H1 (cell line): ENCODE measurements at regions of chr1 and their contacts with region 1.

Region 1: DNA sequence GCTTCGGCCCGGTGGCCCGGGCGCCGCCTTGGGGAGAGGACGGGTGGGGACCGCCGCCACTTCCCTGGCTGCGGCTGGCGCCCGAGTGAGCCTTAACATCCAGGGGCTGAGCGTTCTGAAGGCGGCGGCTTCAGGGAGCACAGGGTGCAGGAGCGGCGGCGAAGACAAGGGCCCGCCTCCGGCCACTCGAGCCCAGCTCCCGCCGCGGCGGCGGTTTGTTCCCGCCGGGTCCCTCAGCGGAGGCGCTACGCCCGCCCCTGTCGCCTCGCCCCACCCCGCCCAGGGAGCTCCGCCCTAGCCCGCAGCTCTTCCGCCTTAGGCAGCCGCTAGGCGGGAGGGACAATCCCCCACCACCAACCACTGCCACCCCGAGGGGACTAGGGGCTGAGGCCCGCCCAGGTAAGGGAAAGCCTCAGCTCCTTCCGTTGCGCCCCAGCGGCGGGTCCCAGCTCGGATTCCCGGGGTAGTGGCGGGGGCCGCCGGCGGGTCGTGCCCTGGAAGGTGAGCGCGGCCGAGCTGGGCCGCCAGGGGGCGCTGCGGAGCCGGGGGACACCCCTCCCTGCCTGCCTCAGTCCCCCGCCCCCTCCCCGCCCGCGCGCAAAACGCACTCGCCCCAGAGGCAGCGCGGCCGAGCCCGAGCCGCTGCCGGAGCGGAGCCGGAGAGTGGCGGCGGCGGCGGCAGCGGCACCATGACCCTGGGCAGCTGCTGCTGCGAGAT is at the start of gene FOXD2:
- DNase-seq: peak; percentile 61 to 99
- H3K4me3 ChIP-seq: peak within 1 kb of the TSS; percentile 16 to 65 (median 49)
- H3K27ac ChIP-seq: no peak within 1 kb of the TSS
- H3K4me1 ChIP-seq: peaks cover 3 to 36% (median 18%) of the 10 kb centered on the region in 4 experiments
- H3K27me3 ChIP-seq: peaks cover 92 to 99% (median 98%) of the 10 kb centered on the region in 4 experiments
- CTCF ChIP-seq: peak in 2 of 3 experiments; percentile 54 to 68; a peak in 3 of 4 replicates
- EP300 ChIP-seq: no peak
- POLR2A ChIP-seq: no peak
- RAD21 ChIP-seq: peak; percentile 30 to 38; a peak in 3 of 4 replicates
- total RNA-seq, gene FOXD2: not detected in 2 replicates

Region 2: DNA sequence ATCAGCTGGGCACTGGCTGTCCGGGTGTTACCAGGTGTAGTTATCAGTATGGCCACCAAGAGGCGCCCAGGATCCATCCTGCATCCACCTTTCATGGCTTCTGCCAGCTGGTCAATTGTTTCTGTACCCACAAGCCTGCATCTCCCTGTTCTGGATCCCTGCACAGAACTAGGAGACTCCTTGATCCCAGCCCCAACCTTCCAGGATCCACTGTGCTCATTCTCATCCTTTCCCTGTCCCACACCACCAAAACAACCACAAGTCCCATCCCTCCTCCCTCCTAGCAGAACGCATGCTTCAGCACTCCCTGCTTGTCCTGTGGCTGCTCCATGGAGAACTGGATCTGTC is 48.7 kb before region 1 on chr1:
- CTCF ChIA-PET with region 1: interaction called, 103 read pairs
- POLR2A ChIA-PET with region 1: interaction called, 3 read pairs
- DNase-seq: peak; percentile 46 to 89
- H3K4me3 ChIP-seq: no peak overlapping the region
- H3K27ac ChIP-seq: no peak overlapping the region
- H3K4me1 ChIP-seq: no peaks in the 10 kb centered on the region
- H3K27me3 ChIP-seq: peaks cover 0 to 2% (median 0%) of the 10 kb centered on the region in 4 experiments; a peak in 2 of 7 replicates
- CTCF ChIP-seq: peak; percentile 80 to 93 (median 89)
- EP300 ChIP-seq: no peak
- POLR2A ChIP-seq: no peak
- RAD21 ChIP-seq: peak; percentile 92 to 94

Region 3: DNA sequence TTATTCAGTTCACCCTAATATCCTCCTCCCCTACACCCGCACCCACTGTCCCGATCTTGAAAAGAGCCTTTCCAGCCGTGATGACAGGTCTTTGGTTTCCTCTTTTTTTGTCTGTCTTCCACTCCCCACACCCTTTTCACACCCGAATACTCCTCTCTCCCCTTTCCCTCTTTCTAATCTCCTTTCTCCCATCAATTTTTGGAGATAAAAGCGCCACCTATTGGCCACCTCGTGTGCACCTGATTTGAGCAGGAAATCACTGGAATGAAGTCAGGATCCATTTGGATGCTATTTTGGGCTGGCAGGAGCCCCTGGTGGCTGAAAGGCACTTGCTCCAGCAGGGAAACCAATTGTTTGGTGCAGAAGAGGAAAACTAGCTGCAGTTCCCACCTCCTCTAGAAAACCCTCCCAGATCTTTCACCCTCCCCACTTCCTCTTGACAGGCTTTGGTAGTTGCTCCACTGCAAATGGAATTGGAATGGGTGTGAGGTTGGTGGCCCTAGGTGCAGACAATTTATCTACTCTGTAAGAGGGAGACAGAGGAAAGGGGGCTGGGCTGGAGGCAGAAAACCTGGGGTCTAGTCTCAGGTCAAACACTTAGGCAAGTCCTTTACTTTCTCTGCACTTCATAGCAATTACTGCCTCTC is 13.1 kb before region 1 on chr1:
- CTCF ChIA-PET with region 1: interaction called, 140 read pairs
- POLR2A ChIA-PET with region 1: interaction called, 3 read pairs
- DNase-seq: peak in 1 of 2 experiments; percentile 69
- H3K4me3 ChIP-seq: no peak overlapping the region
- H3K27ac ChIP-seq: no peak overlapping the region
- H3K4me1 ChIP-seq: peaks cover 0 to 3% (median 2%) of the 10 kb centered on the region in 4 experiments; a peak in 2 of 7 replicates
- H3K27me3 ChIP-seq: peaks cover 11 to 53% (median 39%) of the 10 kb centered on the region in 4 experiments
- CTCF ChIP-seq: peak; percentile 72 to 98 (median 95)
- EP300 ChIP-seq: no peak
- POLR2A ChIP-seq: no peak
- RAD21 ChIP-seq: peak; percentile 62 to 71

Region 4: DNA sequence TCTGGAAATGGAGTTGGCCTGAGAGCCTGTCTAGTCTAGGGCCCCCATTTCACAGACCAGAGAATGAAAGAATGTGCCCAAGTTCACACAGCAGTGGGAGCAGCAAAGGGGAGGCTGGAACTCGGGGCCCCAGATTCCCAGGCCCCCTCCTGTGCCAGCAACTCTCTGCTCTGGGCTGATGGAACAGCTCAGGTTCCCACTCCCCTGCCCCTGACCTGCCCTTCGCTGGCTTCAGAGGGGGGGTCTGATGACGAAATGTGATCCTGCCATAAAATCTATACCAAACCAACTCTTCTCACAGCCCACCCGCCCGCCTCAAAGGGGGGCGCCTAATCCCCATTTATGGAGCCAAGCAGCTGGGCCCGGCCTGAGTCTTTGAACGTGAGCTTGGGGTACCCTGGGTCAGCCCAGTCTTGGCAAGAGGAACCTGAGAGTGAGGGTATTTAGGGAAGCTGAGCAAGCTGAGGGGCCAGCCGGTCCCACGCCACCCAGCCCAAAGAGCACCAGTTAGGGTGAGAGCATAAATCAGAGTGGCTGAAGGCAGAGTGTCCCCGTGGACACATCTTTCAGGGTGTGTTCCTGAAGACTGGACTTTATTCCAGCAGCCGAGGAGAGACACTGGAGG is 65.3 kb after region 1 on chr1:
- CTCF ChIA-PET with region 1: interaction called, 17 read pairs
- POLR2A ChIA-PET with region 1: no interaction called
- DNase-seq: no peak
- H3K4me3 ChIP-seq: no peak overlapping the region
- H3K27ac ChIP-seq: no peak overlapping the region
- H3K4me1 ChIP-seq: peaks cover 0 to 4% (median 0%) of the 10 kb centered on the region in 4 experiments; a peak in 1 of 7 replicates
- H3K27me3 ChIP-seq: peaks cover 15 to 30% (median 25%) of the 10 kb centered on the region in 4 experiments
- CTCF ChIP-seq: no peak
- EP300 ChIP-seq: no peak
- POLR2A ChIP-seq: no peak
- RAD21 ChIP-seq: no peak

Region 5: GRCh38 chr1:47624531-47624930 is 186.9 kb after region 1 on chr1:
- CTCF ChIA-PET with region 1: interaction called, 12 read pairs
- POLR2A ChIA-PET with region 1: no interaction called
- DNase-seq: peak; percentile 29 to 55
- H3K4me3 ChIP-seq: no peak overlapping the region
- H3K27ac ChIP-seq: no peak overlapping the region
- H3K4me1 ChIP-seq: no peaks in the 10 kb centered on the region; a peak in 1 of 7 replicates
- H3K27me3 ChIP-seq: peaks cover 0 to 2% (median 0%) of the 10 kb centered on the region in 4 experiments; a peak in 2 of 7 replicates
- CTCF ChIP-seq: peak; percentile 83 to 99 (median 91)
- EP300 ChIP-seq: no peak
- POLR2A ChIP-seq: no peak
- RAD21 ChIP-seq: peak; percentile 84 to 86

Region 6: DNA sequence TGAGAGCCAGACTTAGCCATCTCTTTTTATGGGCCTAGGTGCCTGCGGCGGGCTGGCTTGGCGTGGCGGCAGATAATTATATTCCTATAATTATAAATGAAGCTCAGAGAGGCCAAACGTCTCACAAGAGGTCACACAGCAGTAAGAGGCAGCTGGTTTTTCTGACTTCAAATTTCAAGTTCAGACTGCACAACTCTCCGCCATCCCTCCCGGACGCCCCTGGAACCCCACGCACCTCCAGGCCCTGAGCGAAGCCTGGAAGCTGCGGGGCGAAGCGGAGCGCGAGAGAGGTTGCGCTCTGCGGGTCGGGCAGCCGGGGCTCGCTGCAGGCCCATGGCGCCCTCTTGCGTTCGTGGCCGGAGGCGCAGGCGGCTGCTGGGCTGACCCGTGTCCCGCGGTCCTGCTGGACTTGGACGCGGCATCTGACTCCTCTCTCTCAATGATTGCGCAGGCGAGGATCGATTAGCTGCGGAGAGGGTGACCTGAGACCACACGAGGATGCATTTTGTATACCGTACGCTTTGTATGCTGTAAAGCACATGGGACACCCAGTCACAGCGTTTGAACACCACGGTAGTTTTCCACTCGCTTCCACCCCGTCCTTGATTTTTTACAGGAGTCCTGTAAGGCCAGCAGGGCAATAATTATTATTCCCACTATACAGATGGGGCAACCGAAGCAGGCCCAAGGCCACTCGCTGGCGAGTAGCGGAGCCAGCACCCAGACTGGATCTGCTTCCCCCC is 272.9 kb after region 1 on chr1:
- CTCF ChIA-PET with region 1: interaction called, 77 read pairs
- POLR2A ChIA-PET with region 1: no interaction called
- DNase-seq: peak in 1 of 2 experiments; percentile 97
- H3K4me3 ChIP-seq: peak overlapping the region; percentile 20 to 63 (median 47); a peak in 4 of 8 replicates
- H3K27ac ChIP-seq: no peak overlapping the region
- H3K4me1 ChIP-seq: peaks cover 0 to 19% (median 5%) of the 10 kb centered on the region in 4 experiments; a peak in 3 of 7 replicates
- H3K27me3 ChIP-seq: peaks cover 44 to 74% (median 71%) of the 10 kb centered on the region in 4 experiments
- CTCF ChIP-seq: peak; percentile 93 to 97 (median 97)
- EP300 ChIP-seq: no peak
- POLR2A ChIP-seq: no peak
- RAD21 ChIP-seq: peak; percentile 93 to 96